A549 (cell line): ENCODE measurements at regions of chr17 and their contacts with region 1.

Region 1: DNA sequence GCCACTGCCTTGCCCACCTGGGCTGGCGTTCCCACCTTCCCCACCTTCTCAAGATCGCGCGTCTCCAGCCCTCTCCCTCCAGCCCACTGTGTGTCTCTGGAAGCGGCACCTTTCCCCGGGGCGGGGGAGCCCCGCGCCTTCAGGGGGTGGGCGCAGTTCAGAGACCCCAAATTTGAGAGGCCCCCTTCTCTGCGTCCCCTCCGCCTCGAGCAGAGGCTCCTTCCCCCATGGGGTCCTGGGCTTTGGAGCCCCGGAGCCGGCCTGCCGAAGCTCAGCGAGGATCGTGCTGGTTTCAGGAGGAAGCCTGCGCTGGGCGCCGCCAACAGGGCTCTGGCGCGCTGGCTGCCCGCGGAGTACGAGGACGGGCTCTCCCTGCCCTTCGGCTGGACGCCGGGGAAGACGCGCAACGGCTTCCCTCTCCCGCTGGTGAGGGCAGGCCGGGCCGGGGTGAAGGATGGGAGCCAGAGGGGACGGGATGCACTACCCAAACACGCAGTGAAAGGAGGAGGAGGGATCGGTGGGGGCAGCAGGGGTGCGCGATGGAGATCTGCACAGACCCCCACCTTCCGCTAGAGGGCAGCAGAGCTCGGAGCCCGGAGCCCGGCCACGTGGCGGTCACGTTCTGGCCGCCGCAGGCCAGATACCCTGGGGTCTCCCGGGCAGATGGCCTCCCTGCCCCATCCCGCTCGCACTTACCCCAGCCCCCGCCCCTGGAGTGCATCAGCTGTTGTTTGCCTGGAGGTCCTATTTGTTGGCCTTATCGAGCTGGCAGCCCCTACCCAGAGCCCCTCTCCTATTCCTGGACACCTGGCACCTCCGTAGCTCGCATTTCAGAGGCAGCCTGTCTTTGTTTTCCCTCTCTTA is 11.1 kb downstream of the LPO start:
- DNase-seq: peak; percentile 60 to 95
- ATAC-seq: peak; percentile 70 to 91
- H3K4me3 ChIP-seq: peak overlapping the region; percentile 43
- H3K27ac ChIP-seq: peak overlapping the region; percentile 52 to 72; a peak in 5 of 6 replicates
- H3K4me1 ChIP-seq: peaks cover 8% of the 10 kb centered on the region
- CTCF ChIP-seq: peak; percentile 94
- EP300 ChIP-seq: no peak
- POLR2A ChIP-seq: no peak
- RAD21 ChIP-seq: peak; percentile 58 to 79

Region 2: GRCh38 chr17:58219001-58219788 is 30.3 kb before region 1 on chr17 and contains the start of gene MKS1:
- CTCF ChIA-PET with region 1: interaction called, 62 read pairs
- POLR2A ChIA-PET with region 1: no interaction called
- DNase-seq: peak; percentile 95 to 100
- ATAC-seq: peak; percentile 98 to 100
- H3K4me3 ChIP-seq: peak within 1 kb of the TSS; percentile 77
- H3K27ac ChIP-seq: peak within 1 kb of the TSS; percentile 85 to 89
- H3K4me1 ChIP-seq: peaks cover 9% of the 10 kb centered on the region; the same call in 2 of the 3 replicates
- CTCF ChIP-seq: peak; percentile 34; the same call in 2 of the 3 replicates
- EP300 ChIP-seq: no peak
- POLR2A ChIP-seq: peak; percentile 93
- RAD21 ChIP-seq: no peak
- polyA plus RNA-seq, gene MKS1: 18.6 and 19.0 TPM in 2 replicates

Region 3: DNA sequence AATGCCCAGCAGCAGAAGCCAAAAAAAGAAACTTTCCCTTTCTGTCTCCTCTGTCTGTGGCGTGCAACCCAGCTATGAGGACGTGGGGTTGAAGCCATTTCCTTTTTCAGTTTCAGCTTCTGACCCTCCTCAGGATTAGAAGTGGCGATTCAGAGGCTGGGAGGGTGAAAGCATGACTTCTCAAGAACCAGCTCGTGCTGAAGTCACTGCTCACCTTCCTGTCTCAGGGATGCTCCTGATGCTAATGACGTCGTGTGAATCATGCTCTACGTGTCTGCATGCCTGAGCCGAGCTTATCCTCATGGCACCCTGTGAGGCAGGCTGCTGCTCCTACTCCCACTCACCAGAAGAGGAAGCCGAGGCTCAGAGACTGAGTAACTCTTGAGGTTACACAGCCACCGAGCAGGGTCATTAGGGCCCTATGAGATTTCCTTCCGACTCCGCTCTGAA is 16.8 kb before region 1 on chr17:
- CTCF ChIA-PET with region 1: interaction called, 69 read pairs
- POLR2A ChIA-PET with region 1: no interaction called
- DNase-seq: peak in 1 of 2 experiments; percentile 44
- ATAC-seq: peak; percentile 65 to 66
- H3K4me3 ChIP-seq: no peak overlapping the region
- H3K27ac ChIP-seq: no peak overlapping the region
- H3K4me1 ChIP-seq: no peaks in the 10 kb centered on the region
- CTCF ChIP-seq: no peak
- EP300 ChIP-seq: no peak
- POLR2A ChIP-seq: no peak
- RAD21 ChIP-seq: no peak

Region 4: DNA sequence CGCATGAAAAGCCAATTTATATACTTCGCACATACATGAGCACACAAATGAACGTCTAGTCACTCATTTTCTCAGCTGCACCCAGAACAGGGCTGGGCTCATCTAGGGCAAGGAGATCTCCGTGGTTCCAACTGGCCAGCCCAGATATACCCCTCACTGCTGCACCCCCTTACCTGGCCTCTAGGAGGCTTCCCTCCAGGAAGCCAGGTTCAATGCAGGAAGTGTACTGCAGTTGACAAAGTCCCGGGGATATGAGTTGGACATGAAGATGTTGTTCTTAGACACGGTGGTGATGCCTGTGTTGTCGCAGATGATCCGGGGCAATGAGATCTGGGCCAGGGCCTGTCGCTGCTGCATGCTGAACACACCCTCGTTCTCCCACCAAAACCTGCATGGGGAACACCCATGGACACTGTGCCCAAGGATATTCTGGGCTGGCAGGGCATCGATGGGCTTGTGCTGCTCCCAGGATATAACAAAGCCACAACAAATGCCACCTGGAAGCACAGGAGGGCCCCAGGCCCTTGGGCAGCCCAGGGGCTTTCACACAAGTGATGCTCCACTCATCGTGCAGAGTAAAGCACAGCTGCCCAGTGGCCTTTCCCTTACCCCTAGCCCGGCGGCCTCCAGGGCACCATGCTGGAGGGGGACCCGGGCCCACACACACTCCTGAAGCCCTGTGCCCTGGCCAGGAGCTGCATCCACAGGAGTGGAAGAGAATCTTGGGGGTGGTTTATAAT is 21.1 kb after region 1 on chr17:
- CTCF ChIA-PET with region 1: interaction called, 14 read pairs
- POLR2A ChIA-PET with region 1: no interaction called
- DNase-seq: no peak
- ATAC-seq: peak; percentile 52 to 66; a peak in 4 of 6 replicates
- H3K4me3 ChIP-seq: no peak overlapping the region
- H3K27ac ChIP-seq: no peak overlapping the region
- H3K4me1 ChIP-seq: no peaks in the 10 kb centered on the region
- CTCF ChIP-seq: no peak
- EP300 ChIP-seq: no peak
- POLR2A ChIP-seq: no peak
- RAD21 ChIP-seq: no peak

Region 5: GRCh38 chr17:58303971-58304725 is 54.6 kb after region 1 on chr17:
- CTCF ChIA-PET with region 1: interaction called, 23 read pairs
- POLR2A ChIA-PET with region 1: no interaction called
- DNase-seq: peak; percentile 63 to 93
- ATAC-seq: peak; percentile 70 to 90; a peak in 5 of 6 replicates
- H3K4me3 ChIP-seq: no peak overlapping the region
- H3K27ac ChIP-seq: no peak overlapping the region
- H3K4me1 ChIP-seq: no peaks in the 10 kb centered on the region
- CTCF ChIP-seq: peak; percentile 59
- EP300 ChIP-seq: no peak
- POLR2A ChIP-seq: no peak
- RAD21 ChIP-seq: peak; percentile 30 to 55; a peak in 3 of 5 replicates